Gastrocnemius medialis (tissue), 4 donors: ENCODE measurements at regions of chr19 and their contacts with region 1.

Region 1: GRCh38 chr19:39833464-39834286 is at the start of gene DYRK1B:
- DNase-seq: peak; percentile 99
- ATAC-seq: peak; percentile 87 to 91
- H3K4me3 ChIP-seq: peak within 1 kb of the TSS; percentile 70 to 97 (median 80)
- H3K27ac ChIP-seq: peak within 1 kb of the TSS; percentile 90 to 99 (median 94)
- H3K4me1 ChIP-seq: peaks cover 19 to 33% of the 10 kb centered on the region in 2 donors
- H3K27me3 ChIP-seq: no peaks in the 10 kb centered on the region
- CTCF ChIP-seq: no peak
- POLR2A ChIP-seq: peak in 1 of 2 donors; percentile 76
- total RNA-seq, gene DYRK1B: 39.6 to 68.7 (median 61.8) TPM

Region 2: GRCh38 chr19:39412100-39412866 is 421.4 kb before region 1 on chr19 and contains the start of gene PLEKHG2:
- in situ Hi-C with region 1: no loop called
- intact Hi-C with region 1: loop called (anchors 10 kb)
- DNase-seq: peak; percentile 97 to 98
- ATAC-seq: peak; percentile 63 to 73
- H3K4me3 ChIP-seq: peak within 1 kb of the TSS; percentile 81 to 99 (median 94)
- H3K27ac ChIP-seq: peak within 1 kb of the TSS; percentile 98 to 100 (median 100)
- H3K4me1 ChIP-seq: peaks cover 15 to 19% of the 10 kb centered on the region in 2 donors
- H3K27me3 ChIP-seq: no peaks in the 10 kb centered on the region
- CTCF ChIP-seq: peak; percentile 90 to 98 (median 97)
- POLR2A ChIP-seq: peak; percentile 70 to 87
- total RNA-seq, gene PLEKHG2: 1.3 to 3.6 (median 3.3) TPM

Region 3: DNA sequence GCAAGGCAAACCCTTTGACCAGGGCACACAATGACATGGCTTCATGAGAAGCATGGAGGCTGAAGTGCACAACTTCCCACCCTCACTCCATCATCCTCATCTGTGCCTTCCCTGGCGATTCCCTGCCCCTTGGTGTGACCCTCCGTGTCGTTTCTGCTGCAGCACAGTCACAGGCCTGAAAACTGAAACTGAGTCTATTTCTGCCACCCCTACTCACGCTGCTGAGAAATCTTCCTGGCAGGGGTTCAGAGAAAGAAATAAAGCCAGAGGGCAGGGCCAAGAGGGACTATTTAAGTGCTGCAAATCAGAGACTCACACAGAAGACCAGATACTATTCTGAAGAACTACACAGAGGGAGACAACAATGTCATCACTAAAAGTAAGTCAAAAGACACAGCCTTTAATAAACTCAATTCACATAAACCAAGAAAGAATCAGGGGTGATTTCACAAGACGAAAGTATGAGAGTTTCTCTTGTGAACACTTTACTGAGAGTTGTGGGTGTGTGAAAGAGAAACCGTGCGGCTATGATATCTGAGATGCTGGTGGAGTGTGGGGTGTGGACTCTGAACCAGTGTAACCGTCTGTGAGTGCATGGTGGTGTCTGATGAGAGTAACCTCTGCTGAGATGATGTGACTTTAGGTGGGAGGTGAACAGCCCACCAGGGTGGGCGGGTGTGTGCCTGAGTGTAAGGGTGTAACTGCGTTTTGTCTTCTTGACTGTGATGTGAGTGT is 154.5 kb before region 1 on chr19:
- in situ Hi-C with region 1: no loop called
- intact Hi-C with region 1: no loop called
- DNase-seq: peak; percentile 55 to 75
- ATAC-seq: peak; percentile 86 to 89
- H3K4me3 ChIP-seq: peak overlapping the region; percentile 19 to 36 (median 26)
- H3K27ac ChIP-seq: peak overlapping the region; percentile 85 to 95 (median 92)
- H3K4me1 ChIP-seq: peaks cover 19 to 30% of the 10 kb centered on the region in 2 donors
- H3K27me3 ChIP-seq: no peaks in the 10 kb centered on the region
- CTCF ChIP-seq: no peak
- POLR2A ChIP-seq: peak in 1 of 2 donors; percentile 50

Region 4: GRCh38 chr19:39802958-39803357 is 30.7 kb before region 1 on chr19:
- in situ Hi-C with region 1: no loop called
- intact Hi-C with region 1: loop called (anchors 1 kb)
- DNase-seq: peak; percentile 85 to 94
- ATAC-seq: peak; percentile 96 to 98
- H3K4me3 ChIP-seq: no peak overlapping the region
- H3K27ac ChIP-seq: peak overlapping the region; percentile 80 to 87 (median 82)
- H3K4me1 ChIP-seq: peaks cover 15 to 33% of the 10 kb centered on the region in 2 donors
- H3K27me3 ChIP-seq: no peaks in the 10 kb centered on the region
- CTCF ChIP-seq: no peak
- POLR2A ChIP-seq: peak in 1 of 2 donors; percentile 32